WTC11 (cell line): ENCODE measurements at regions of chr1 and their contacts with region 1.

Region 1: DNA sequence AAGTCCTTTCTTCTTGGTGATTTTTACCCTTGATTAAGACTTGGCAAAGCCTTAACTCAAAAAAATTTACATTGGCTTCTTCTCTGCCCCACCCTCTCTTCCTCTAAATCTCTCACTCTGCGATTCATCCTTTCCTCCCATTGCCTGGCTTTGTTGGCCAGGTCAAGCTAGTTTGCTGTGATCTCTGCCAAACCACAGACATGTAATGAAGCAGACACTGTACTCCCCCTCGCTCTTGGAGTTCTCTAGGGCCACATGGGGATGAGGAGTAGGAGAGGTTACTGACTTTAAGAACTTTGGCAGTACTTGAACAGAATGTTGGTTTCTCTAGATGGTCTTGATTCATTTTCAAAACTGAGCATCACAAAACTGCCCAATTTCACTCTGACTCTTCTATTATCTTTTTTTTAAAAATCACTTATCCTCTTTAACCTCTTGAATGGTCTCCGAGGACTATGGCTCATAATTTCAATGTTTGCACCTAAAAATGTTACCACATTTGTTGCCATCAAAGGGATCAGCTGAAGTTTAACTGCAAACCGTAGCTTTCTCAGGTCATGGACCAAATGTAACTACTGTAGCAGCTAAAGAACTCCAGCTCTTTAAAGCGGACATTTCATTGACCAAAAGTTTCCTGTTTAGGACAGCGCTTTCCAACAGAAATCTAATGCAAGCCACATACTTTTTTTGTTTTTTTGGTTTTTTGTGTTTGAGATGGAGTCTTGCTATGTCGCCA is 62.7 kb upstream of the IPO9 start:
- DNase-seq: no peak
- ATAC-seq: no peak
- H3K4me3 Mint-ChIP-seq: no peak overlapping the region
- H3K27ac Mint-ChIP-seq: no peak overlapping the region
- H3K4me1 Mint-ChIP-seq: peaks cover 23% of the 10 kb centered on the region
- H3K27me3 Mint-ChIP-seq: no peaks in the 10 kb centered on the region
- CTCF ChIP-seq: no peak

Region 2: DNA sequence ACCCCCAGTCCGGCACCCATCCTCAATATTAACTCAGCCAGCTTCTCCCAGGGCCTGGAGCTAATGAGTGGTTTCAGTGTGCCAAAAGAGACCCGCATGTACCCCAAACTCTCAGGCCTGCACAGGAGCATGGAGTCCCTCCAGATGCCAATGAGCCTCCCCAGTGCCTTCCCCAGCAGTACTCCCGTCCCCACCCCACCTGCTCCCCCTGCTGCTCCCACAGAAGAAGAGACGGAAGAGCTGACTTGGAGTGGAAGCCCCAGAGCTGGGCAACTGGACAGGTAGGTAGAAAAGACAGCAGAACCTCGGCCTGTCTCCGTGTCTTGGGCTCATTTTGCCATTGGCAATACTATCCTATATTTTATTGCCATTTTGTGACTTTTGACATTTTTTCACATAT is 17.3 kb after region 1 on chr1:
- CTCF ChIA-PET with region 1: interaction called, 3 read pairs
- POLR2A ChIA-PET with region 1: interaction called, 11 read pairs
- DNase-seq: peak; percentile 21
- ATAC-seq: peak; percentile 39; the same call in 1 of the 2 replicates
- H3K4me3 Mint-ChIP-seq: no peak overlapping the region
- H3K27ac Mint-ChIP-seq: no peak overlapping the region
- H3K4me1 Mint-ChIP-seq: no peaks in the 10 kb centered on the region
- H3K27me3 Mint-ChIP-seq: no peaks in the 10 kb centered on the region
- CTCF ChIP-seq: no peak

Region 3: DNA sequence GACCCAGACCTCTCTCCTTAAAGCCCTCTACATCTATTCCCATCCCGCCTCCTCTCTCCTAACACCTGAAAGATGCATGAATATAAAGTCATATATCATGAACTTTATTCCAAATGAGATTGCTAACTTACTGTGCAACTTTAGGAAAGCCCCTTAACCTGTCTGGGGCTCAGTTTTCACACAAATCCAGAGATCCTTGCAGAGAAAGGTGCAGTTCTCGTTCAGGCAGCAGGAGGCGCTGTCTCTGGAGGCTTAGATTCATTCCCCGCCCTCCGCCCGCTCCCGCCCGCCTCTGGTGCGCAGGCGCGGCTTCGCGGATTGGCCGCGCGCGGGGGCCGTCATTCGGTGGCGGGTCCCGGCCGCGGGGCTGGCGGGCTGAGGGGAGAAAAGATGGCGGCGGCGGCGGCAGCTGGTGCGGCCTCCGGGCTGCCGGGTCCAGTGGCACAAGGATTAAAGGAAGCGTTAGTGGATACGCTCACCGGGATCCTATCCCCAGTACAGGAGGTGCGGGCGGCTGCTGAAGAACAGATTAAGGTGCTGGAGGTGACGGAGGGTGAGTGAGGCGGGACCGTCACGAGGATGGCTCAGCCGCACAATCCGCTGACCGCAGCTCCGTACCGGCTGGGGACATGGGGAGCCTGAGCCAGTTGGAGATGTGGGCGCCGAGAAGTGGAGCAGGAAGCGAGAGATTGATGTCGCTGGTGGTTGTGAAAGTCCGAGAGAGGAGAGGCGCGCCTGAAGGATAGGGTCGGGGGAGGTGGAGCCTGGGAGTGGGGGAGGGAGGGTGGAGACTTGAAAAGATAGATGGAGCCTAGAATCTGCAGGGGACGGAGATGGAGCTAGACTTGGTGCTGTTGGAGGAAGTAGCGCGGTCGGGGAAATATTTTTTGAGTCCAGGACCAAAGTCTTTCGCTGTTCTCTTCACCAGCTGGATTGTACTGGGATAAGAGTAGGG is 62.8 kb after region 1 on chr1 and contains the start of gene IPO9:
- CTCF ChIA-PET with region 1: no interaction called
- POLR2A ChIA-PET with region 1: no interaction called
- DNase-seq: peak; percentile 97
- ATAC-seq: peak; percentile 90
- H3K4me3 Mint-ChIP-seq: peak within 1 kb of the TSS; percentile 98
- H3K27ac Mint-ChIP-seq: peak within 1 kb of the TSS; percentile 93
- H3K4me1 Mint-ChIP-seq: peaks cover 50% of the 10 kb centered on the region
- H3K27me3 Mint-ChIP-seq: no peaks in the 10 kb centered on the region
- CTCF ChIP-seq: peak; percentile 92
- total RNA-seq, gene IPO9: 94.1 to 98.6 TPM (median 97.2 TPM) in 3 replicates